ENCODE measurements at regions of chr3 and their contacts with region 1.

Region 1: DNA sequence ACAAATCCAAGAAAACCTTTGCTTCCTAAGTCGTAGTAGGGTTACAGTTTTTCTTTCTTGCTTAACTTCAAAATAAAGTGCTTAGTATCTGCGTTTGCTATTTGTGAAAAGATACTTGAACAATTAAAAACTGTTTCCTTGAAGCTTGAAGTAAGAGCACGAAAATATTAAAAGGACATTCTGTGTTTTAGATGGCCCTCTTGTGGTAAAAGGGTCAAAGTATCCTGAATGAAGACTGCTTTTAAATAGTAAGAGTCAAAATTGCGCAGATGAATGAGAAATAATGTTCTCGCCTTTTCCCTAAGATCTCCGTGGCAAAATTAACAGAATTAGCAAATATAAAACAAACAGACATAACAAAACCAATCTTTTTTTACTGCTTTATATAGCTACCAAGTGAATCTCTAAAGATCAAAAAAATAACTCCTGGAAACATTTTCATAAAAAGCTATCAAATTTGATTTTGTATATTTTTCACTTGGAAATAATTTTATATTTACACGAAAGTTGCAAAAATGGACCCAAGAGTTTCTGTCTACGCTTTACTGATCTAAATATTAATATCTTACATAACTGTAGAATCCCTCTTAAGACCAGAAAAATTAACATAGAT is 175.4 kb downstream of the MBNL1 start:
- DNase-seq: peak; percentile 36
- H3K4me3 ChIP-seq: no peak overlapping the region
- H3K27ac ChIP-seq: no peak overlapping the region
- H3K27me3 ChIP-seq: no peaks in the 10 kb centered on the region
- CTCF ChIP-seq: peak; percentile 64

Region 2: GRCh38 chr3:151804267-151804666 is 639.9 kb before region 1 on chr3:
- CTCF ChIA-PET with region 1: no interaction called
- POLR2A ChIA-PET with region 1: no interaction called
- DNase-seq: no peak
- H3K4me3 ChIP-seq: no peak overlapping the region
- H3K27ac ChIP-seq: no peak overlapping the region
- H3K27me3 ChIP-seq: no peaks in the 10 kb centered on the region
- CTCF ChIP-seq: no peak

Region 3: GRCh38 chr3:152026033-152026556 is 418.0 kb before region 1 on chr3:
- CTCF ChIA-PET with region 1: interaction called, 15 read pairs
- POLR2A ChIA-PET with region 1: interaction called, 3 read pairs
- DNase-seq: peak; percentile 54
- H3K4me3 ChIP-seq: no peak overlapping the region
- H3K27ac ChIP-seq: no peak overlapping the region
- H3K27me3 ChIP-seq: no peaks in the 10 kb centered on the region
- CTCF ChIP-seq: peak; percentile 48

Region 4: GRCh38 chr3:152071924-152072323 is 372.2 kb before region 1 on chr3:
- CTCF ChIA-PET with region 1: interaction called, 13 read pairs
- POLR2A ChIA-PET with region 1: no interaction called
- DNase-seq: peak; percentile 21
- H3K4me3 ChIP-seq: no peak overlapping the region
- H3K27ac ChIP-seq: no peak overlapping the region
- H3K27me3 ChIP-seq: no peaks in the 10 kb centered on the region
- CTCF ChIP-seq: peak; percentile 61

Region 5: GRCh38 chr3:152151216-152151876 is 292.8 kb before region 1 on chr3:
- CTCF ChIA-PET with region 1: no interaction called
- POLR2A ChIA-PET with region 1: no interaction called
- DNase-seq: no peak
- H3K4me3 ChIP-seq: no peak overlapping the region
- H3K27ac ChIP-seq: no peak overlapping the region
- H3K27me3 ChIP-seq: no peaks in the 10 kb centered on the region
- CTCF ChIP-seq: no peak

Region 6: GRCh38 chr3:152305075-152305474 is 139.1 kb before region 1 on chr3:
- CTCF ChIA-PET with region 1: interaction called, 11 read pairs
- POLR2A ChIA-PET with region 1: no interaction called
- DNase-seq: no peak
- H3K4me3 ChIP-seq: no peak overlapping the region
- H3K27ac ChIP-seq: no peak overlapping the region
- H3K27me3 ChIP-seq: no peaks in the 10 kb centered on the region
- CTCF ChIP-seq: no peak

Region 7: GRCh38 chr3:152719264-152719663 is 275.1 kb after region 1 on chr3:
- CTCF ChIA-PET with region 1: no interaction called
- POLR2A ChIA-PET with region 1: no interaction called
- DNase-seq: no peak
- H3K4me3 ChIP-seq: no peak overlapping the region
- H3K27ac ChIP-seq: no peak overlapping the region
- H3K27me3 ChIP-seq: no peaks in the 10 kb centered on the region
- CTCF ChIP-seq: no peak

Measured in AG04450 (cell line).